Activated CD4-positive, alpha-beta T cell treated with anti-CD3 and anti-CD28 coated beads, Interleukin-2, amount 10 ng/mL, durations not matched to agents 24 days and 14 days (primary cell): ENCODE measurements at regions of chr16 and their contacts with region 1.

Region 1: GRCh38 chr16:58629572-58630104 is at the start of gene CNOT1:
- DNase-seq: peak; percentile 99
- H3K4me3 Mint-ChIP-seq: peak within 1 kb of the TSS; percentile 97
- H3K27ac Mint-ChIP-seq: peak within 1 kb of the TSS; percentile 100
- H3K4me1 Mint-ChIP-seq: peaks cover 27% of the 10 kb centered on the region
- H3K27me3 Mint-ChIP-seq: peaks cover 6% of the 10 kb centered on the region
- total RNA-seq, gene CNOT1: 270 and 271 TPM in 2 replicates

Region 2: DNA sequence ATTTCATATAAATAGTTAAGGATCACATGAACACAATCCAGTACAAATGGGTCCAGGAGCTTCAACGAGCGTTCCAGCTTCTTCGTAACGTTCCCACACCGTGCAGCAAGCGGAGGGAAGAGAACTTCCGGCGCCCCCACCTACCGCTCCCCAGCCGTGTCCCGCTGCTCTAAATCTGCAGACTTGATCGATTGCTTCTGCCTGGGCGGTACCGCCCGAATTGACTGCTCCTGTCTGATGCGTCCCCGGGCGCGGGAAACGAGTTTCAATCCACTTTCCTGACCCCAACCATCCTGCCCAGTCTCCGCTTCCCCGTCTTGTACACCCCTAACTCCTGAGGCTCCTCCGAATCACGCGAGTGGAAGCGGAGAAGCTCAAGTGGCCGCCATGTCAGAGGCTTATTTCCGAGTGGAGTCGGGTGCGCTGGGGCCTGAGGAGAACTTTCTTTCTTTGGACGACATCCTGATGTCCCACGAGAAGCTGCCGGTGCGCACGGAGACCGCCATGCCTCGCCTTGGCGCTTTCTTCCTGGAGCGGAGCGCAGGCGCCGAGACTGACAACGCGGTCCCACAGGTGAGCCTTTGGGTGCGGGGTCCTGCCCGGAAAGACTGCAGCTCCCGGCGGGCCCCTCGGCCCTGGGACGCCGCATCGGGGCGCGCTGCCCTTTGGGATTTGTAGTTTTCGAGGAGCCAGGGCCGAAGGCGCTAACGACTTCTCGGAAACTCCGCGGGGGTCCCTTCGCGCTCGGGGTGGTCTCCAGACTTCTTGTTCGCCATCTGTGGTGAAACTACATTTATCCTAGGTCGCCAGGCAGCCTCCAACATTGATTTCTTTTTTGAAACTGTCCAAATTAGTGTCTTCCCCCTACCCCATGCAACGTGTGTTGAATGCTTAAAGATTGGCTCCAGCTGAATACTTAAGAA is 237.2 kb before region 1 on chr16 and contains the start of gene GINS3:
- intact Hi-C with region 1: loop called (anchors 1 kb)
- DNase-seq: peak; percentile 96
- H3K4me3 Mint-ChIP-seq: peak within 1 kb of the TSS; percentile 98
- H3K27ac Mint-ChIP-seq: peak within 1 kb of the TSS; percentile 96
- H3K4me1 Mint-ChIP-seq: peaks cover 17% of the 10 kb centered on the region
- H3K27me3 Mint-ChIP-seq: peaks cover 16% of the 10 kb centered on the region
- total RNA-seq, gene GINS3: 24.1 and 25.0 TPM in 2 replicates

Region 3: GRCh38 chr16:58515125-58515870 is 114.3 kb before region 1 on chr16 and contains the start of gene SETD6:
- intact Hi-C with region 1: loop called (anchors 1 kb)
- DNase-seq: peak; percentile 96
- H3K4me3 Mint-ChIP-seq: peak within 1 kb of the TSS; percentile 94
- H3K27ac Mint-ChIP-seq: peak within 1 kb of the TSS; percentile 91
- H3K4me1 Mint-ChIP-seq: peaks cover 19% of the 10 kb centered on the region
- H3K27me3 Mint-ChIP-seq: no peaks in the 10 kb centered on the region
- total RNA-seq, gene SETD6: 33.4 and 34.4 TPM in 2 replicates

Region 4: DNA sequence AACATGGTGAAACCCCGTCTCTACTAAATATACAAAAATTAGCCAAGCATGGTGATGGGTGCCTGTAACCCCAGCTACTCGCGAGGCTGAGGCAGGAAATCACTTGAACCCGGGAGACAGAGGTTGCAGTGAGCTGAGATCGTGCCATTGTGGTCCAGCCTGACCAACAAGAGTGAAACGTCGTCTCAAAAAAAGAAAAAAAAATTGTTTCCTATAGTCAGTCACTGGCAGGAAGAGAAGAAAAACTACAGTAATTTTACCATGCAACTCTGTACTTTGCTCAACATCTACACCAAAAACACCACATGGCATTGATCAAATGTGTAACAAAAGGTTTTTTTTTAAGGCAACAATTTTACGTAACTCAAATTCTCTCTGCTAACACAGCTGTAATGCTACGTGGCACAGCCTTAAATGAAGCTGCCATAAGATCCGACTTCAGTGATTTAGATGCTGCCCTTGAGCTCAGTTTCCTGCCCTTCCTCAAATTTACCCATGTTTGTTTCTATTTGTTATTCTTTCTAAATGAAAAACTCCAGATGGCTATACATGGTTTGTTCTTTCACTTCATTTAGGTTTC is 40.2 kb before region 1 on chr16:
- intact Hi-C with region 1: loop called (anchors 5 kb)
- DNase-seq: no peak
- H3K4me3 Mint-ChIP-seq: no peak overlapping the region
- H3K27ac Mint-ChIP-seq: peak overlapping the region; percentile 7
- H3K4me1 Mint-ChIP-seq: peaks cover 12% of the 10 kb centered on the region
- H3K27me3 Mint-ChIP-seq: no peaks in the 10 kb centered on the region

Region 5: DNA sequence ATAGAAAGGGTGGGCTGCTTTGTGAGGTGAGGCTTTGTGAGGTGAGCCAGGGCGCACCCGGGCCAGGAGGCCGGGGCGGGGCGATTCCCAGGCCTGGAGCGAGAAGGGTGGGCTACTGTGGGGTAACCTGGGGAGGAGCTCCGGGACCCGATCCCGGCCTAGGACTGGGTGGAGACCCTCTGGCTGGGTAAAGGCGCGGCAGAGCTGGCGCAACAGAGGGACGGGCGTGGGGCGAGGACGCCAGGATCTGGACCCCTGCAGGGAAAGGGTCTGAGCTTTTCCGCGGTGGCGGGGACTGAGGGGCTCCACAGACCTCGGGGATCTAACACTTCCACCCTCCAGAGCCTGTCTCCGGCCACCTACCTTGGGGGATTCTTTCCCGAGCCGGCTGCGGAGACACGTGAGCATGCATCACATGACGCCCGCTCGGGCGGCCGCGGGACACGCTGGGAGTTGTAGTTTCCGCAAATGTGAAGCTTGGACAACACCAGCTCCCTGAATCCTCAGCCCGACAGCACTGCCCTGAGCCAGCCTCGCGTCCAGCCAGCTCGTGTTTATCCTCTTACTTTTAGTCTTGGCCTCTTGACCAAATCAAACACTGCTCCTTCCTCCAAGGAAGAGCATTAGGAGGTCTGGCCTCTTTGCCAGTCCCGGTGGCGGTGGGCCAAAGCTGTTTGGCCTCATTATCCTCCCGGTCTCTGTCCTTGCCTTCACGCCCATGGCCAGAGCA is 54.9 kb after region 1 on chr16 and contains the start of gene SLC38A7:
- intact Hi-C with region 1: loop called (anchors 1 kb)
- DNase-seq: peak; percentile 93
- H3K4me3 Mint-ChIP-seq: peak within 1 kb of the TSS; percentile 92
- H3K27ac Mint-ChIP-seq: peak within 1 kb of the TSS; percentile 83
- H3K4me1 Mint-ChIP-seq: peaks cover 13% of the 10 kb centered on the region
- H3K27me3 Mint-ChIP-seq: peaks cover 2% of the 10 kb centered on the region
- total RNA-seq, gene SLC38A7: 7.8 and 10.8 TPM in 2 replicates

Region 6: GRCh38 chr16:58733671-58734458 is 104.2 kb after region 1 on chr16 and contains the start of gene GOT2:
- intact Hi-C with region 1: loop called (anchors 1 kb)
- DNase-seq: peak; percentile 95
- H3K4me3 Mint-ChIP-seq: peak within 1 kb of the TSS; percentile 93
- H3K27ac Mint-ChIP-seq: peak within 1 kb of the TSS; percentile 98
- H3K4me1 Mint-ChIP-seq: peaks cover 17% of the 10 kb centered on the region
- H3K27me3 Mint-ChIP-seq: peaks cover 2% of the 10 kb centered on the region
- total RNA-seq, gene GOT2: 141 and 144 TPM in 2 replicates

Region 7: GRCh38 chr16:58755989-58756649 is 126.5 kb after region 1 on chr16:
- intact Hi-C with region 1: loop called (anchors 2 kb)
- DNase-seq: peak; percentile 93
- H3K4me3 Mint-ChIP-seq: peak overlapping the region; percentile 43
- H3K27ac Mint-ChIP-seq: peak overlapping the region; percentile 57
- H3K4me1 Mint-ChIP-seq: peaks cover 7% of the 10 kb centered on the region
- H3K27me3 Mint-ChIP-seq: peaks cover 1% of the 10 kb centered on the region